ENCODE measurements at regions of chr17 and their contacts with region 1.

Region 1: GRCh38 chr17:55356434-55357328 is 65.0 kb downstream of the MMD start:
- DNase-seq: peak; percentile 67 to 83 (median 74)
- ATAC-seq: peak; percentile 98
- H3K4me3 ChIP-seq: no peak overlapping the region
- H3K27ac ChIP-seq: no peak overlapping the region
- H3K4me1 ChIP-seq: no peaks in the 10 kb centered on the region; a peak in 2 of 5 replicates
- H3K27me3 ChIP-seq: no peaks in the 10 kb centered on the region
- CTCF ChIP-seq: peak; percentile 75 to 89 (median 81)
- EP300 ChIP-seq: no peak
- POLR2A ChIP-seq: no peak
- RAD21 ChIP-seq: peak; percentile 80 to 89

Region 2: DNA sequence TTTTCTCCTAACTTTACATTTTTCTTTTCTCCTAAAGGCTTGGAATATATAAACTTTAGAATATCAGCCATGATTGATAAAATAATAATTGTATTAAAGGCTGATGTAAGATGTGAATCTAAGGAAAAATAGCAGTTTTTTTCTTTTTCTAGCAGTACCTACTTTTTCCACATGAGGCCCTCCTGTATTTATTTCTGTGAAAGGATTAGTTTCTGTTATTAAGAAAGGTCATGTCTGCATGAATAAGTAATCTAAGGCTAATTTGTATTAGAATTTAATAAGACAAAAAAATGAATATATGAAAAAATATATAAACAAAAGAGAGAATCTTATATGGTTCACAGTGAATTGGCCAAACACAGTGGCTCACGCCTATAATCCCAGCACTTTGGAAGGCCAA is 302.8 kb before region 1 on chr17:
- CTCF ChIA-PET with region 1: interaction called, 3 read pairs
- POLR2A ChIA-PET with region 1: no interaction called
- in situ Hi-C with region 1: no loop called
- intact Hi-C with region 1: loop called (anchors 10 kb)
- DNase-seq: no peak
- ATAC-seq: no peak
- H3K4me3 ChIP-seq: no peak overlapping the region
- H3K27ac ChIP-seq: no peak overlapping the region
- H3K4me1 ChIP-seq: peaks cover 0 to 3% of the 10 kb centered on the region in 2 experiments; a peak in 1 of 5 replicates
- H3K27me3 ChIP-seq: no peaks in the 10 kb centered on the region
- CTCF ChIP-seq: peak in 1 of 3 experiments; percentile 53; a peak in 3 of 6 replicates
- EP300 ChIP-seq: no peak
- POLR2A ChIP-seq: no peak
- RAD21 ChIP-seq: peak; percentile 41 to 58

Region 3: GRCh38 chr17:55368706-55369105 is 12.0 kb after region 1 on chr17:
- CTCF ChIA-PET with region 1: no interaction called
- POLR2A ChIA-PET with region 1: no interaction called
- in situ Hi-C with region 1: no loop called
- intact Hi-C with region 1: no loop called
- DNase-seq: no peak
- ATAC-seq: no peak
- H3K4me3 ChIP-seq: no peak overlapping the region
- H3K27ac ChIP-seq: no peak overlapping the region
- H3K4me1 ChIP-seq: no peaks in the 10 kb centered on the region
- H3K27me3 ChIP-seq: no peaks in the 10 kb centered on the region
- CTCF ChIP-seq: no peak
- EP300 ChIP-seq: no peak
- POLR2A ChIP-seq: no peak
- RAD21 ChIP-seq: no peak

Region 4: GRCh38 chr17:55513885-55514591 is 157.4 kb after region 1 on chr17:
- CTCF ChIA-PET with region 1: interaction called, 3 read pairs
- POLR2A ChIA-PET with region 1: interaction called, 5 read pairs
- in situ Hi-C with region 1: no loop called
- intact Hi-C with region 1: loop called (anchors 5 kb)
- DNase-seq: peak; percentile 48 to 81 (median 58)
- ATAC-seq: peak; percentile 83
- H3K4me3 ChIP-seq: no peak overlapping the region
- H3K27ac ChIP-seq: no peak overlapping the region
- H3K4me1 ChIP-seq: no peaks in the 10 kb centered on the region; a peak in 2 of 5 replicates
- H3K27me3 ChIP-seq: peaks cover under 1 to 3% of the 10 kb centered on the region in 2 experiments; a peak in 3 of 5 replicates
- CTCF ChIP-seq: peak; percentile 77 to 92 (median 77)
- EP300 ChIP-seq: no peak
- POLR2A ChIP-seq: no peak
- RAD21 ChIP-seq: peak; percentile 86 to 94

Region 5: GRCh38 chr17:55883149-55883548 is 526.5 kb after region 1 on chr17:
- CTCF ChIA-PET with region 1: no interaction called
- POLR2A ChIA-PET with region 1: no interaction called
- in situ Hi-C with region 1: no loop called
- intact Hi-C with region 1: no loop called
- DNase-seq: peak in 3 of 4 experiments; percentile 9 to 10 (median 10)
- ATAC-seq: peak; percentile 84
- H3K4me3 ChIP-seq: no peak overlapping the region
- H3K27ac ChIP-seq: no peak overlapping the region
- H3K4me1 ChIP-seq: no peaks in the 10 kb centered on the region
- H3K27me3 ChIP-seq: no peaks in the 10 kb centered on the region
- CTCF ChIP-seq: 0 out of 6 replicates have a peak, but pooled peaks of 2 of the 3 experiments have one; percentile 23 to 28
- EP300 ChIP-seq: no peak
- POLR2A ChIP-seq: no peak
- RAD21 ChIP-seq: no peak

Measured in K562 (cell line).